ENCODE measurements at regions of chr16 and their contacts with region 1.

Region 1: GRCh38 chr16:66167564-66168291 is 198.8 kb upstream of the CDH5 start:
- DNase-seq: peak; percentile 46
- ATAC-seq: peak; percentile 55
- H3K4me3 ChIP-seq: no peak overlapping the region
- H3K27ac ChIP-seq: no peak overlapping the region
- H3K4me1 ChIP-seq: peaks cover 6% of the 10 kb centered on the region; the same call in 1 of the 2 replicates
- H3K27me3 ChIP-seq: peaks cover 5% of the 10 kb centered on the region
- CTCF ChIP-seq: peak; percentile 53
- POLR2A ChIP-seq: no peak
- RAD21 ChIP-seq: peak; percentile 66

Region 2: DNA sequence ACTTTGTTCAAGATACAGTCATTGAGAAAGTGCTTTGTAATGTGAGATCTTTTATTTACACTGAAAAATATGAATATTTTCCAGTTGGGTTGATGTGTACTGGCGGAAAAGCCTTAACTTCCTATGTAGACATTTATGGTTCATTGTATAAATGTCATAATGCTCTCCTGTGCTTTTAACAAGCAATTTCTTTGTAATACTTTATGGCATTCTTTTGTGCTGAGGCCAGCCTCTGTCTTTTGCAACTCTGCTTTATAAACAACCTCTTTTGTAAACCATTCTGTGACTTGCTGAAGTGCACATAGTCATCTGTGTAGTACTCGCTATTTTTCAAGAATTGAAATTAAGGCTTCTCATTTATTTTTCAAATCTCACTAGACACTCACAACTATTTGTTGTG is 1337.1 kb before region 1 on chr16:
- CTCF ChIA-PET with region 1: no interaction called
- POLR2A ChIA-PET with region 1: no interaction called
- dilution Hi-C with region 1: no loop called
- in situ Hi-C with region 1: no loop called
- intact Hi-C with region 1: no loop called
- DNase-seq: peak; percentile 87
- ATAC-seq: peak; percentile 91
- H3K4me3 ChIP-seq: no peak overlapping the region
- H3K27ac ChIP-seq: peak overlapping the region; percentile 68; the same call in 1 of the 2 replicates
- H3K4me1 ChIP-seq: 0 out of 2 replicates have a peak, but pooled peaks cover 2% of the 10 kb centered on the region
- H3K27me3 ChIP-seq: no peaks in the 10 kb centered on the region
- CTCF ChIP-seq: no peak
- POLR2A ChIP-seq: no peak
- RAD21 ChIP-seq: 0 out of 2 replicates have a peak, but pooled peaks have one; percentile 10

Region 3: GRCh38 chr16:65315081-65315780 is 852.5 kb before region 1 on chr16:
- CTCF ChIA-PET with region 1: no interaction called
- POLR2A ChIA-PET with region 1: no interaction called
- dilution Hi-C with region 1: no loop called
- in situ Hi-C with region 1: no loop called
- intact Hi-C with region 1: loop called (anchors 10 kb)
- DNase-seq: no peak
- ATAC-seq: no peak
- H3K4me3 ChIP-seq: no peak overlapping the region
- H3K27ac ChIP-seq: no peak overlapping the region
- H3K4me1 ChIP-seq: peaks cover 21% of the 10 kb centered on the region
- H3K27me3 ChIP-seq: no peaks in the 10 kb centered on the region
- CTCF ChIP-seq: no peak
- POLR2A ChIP-seq: no peak
- RAD21 ChIP-seq: no peak

Region 4: GRCh38 chr16:66266436-66267291 is 98.9 kb after region 1 on chr16:
- CTCF ChIA-PET with region 1: no interaction called
- POLR2A ChIA-PET with region 1: no interaction called
- dilution Hi-C with region 1: no loop called
- in situ Hi-C with region 1: no loop called
- intact Hi-C with region 1: no loop called
- DNase-seq: peak; percentile 90
- ATAC-seq: peak; percentile 57
- H3K4me3 ChIP-seq: no peak overlapping the region
- H3K27ac ChIP-seq: peak overlapping the region; percentile 68
- H3K4me1 ChIP-seq: peaks cover 31% of the 10 kb centered on the region
- H3K27me3 ChIP-seq: no peaks in the 10 kb centered on the region
- CTCF ChIP-seq: no peak
- POLR2A ChIP-seq: no peak
- RAD21 ChIP-seq: peak; percentile 22

Region 5: DNA sequence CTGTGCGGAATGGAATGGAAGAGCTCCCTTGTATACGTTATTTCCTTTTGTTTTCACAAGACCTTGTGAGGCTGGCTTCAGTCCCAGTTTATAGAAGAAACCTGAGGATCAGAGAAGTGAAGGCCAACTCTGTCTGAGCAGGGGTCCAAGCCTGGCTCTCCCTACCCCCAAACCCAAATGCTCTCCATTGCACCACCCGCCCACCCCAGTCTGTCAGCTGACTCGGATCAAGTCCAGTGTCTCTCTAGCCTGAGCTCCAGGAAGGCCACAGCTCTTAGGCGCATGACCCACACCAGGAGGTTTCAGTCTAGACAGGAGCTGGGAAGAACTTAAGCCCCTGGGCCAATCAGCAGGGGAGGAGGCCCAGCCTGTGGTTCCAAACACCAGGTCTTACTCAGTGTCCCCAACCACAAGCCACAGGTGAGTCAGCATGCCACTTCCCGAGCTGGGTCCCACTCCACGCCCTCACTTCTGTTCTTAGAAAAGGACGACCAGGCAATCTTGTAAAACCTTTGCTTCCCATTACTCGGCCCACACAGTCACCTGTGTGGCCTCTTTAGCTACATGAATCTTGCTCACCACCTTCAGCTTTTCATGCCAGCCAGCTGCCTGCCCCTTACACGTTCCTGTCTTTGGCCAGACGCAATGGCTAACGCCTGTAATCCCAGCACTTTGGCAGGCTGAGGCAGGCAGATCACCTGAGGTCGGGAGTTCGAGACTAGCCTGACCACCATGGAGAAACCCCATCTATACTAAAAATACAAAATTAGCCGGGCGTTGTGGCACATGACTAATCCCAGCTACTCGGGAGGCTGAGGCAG is 354.4 kb after region 1 on chr16:
- CTCF ChIA-PET with region 1: no interaction called
- POLR2A ChIA-PET with region 1: no interaction called
- dilution Hi-C with region 1: no loop called
- in situ Hi-C with region 1: no loop called
- intact Hi-C with region 1: no loop called
- DNase-seq: peak; percentile 76
- ATAC-seq: peak; percentile 64
- H3K4me3 ChIP-seq: no peak overlapping the region
- H3K27ac ChIP-seq: peak overlapping the region; percentile 8; the same call in 1 of the 2 replicates
- H3K4me1 ChIP-seq: peaks cover 17% of the 10 kb centered on the region
- H3K27me3 ChIP-seq: no peaks in the 10 kb centered on the region
- CTCF ChIP-seq: no peak
- POLR2A ChIP-seq: no peak
- RAD21 ChIP-seq: no peak

Measured in IMR-90 (cell line).